ENCODE measurements at regions of chr5 and their contacts with region 1.

Region 1: GRCh38 chr5:166710288-166710687 is 1581.2 kb upstream of the WWC1 start:
- DNase-seq: peak in 1 of 2 experiments; percentile 7
- H3K4me3 ChIP-seq: no peak overlapping the region
- H3K4me3 Mint-ChIP-seq: no peak overlapping the region
- H3K27ac Mint-ChIP-seq: peak overlapping the region; percentile 43
- H3K4me1 ChIP-seq: peaks cover 37% of the 10 kb centered on the region
- H3K4me1 Mint-ChIP-seq: peaks cover 23% of the 10 kb centered on the region
- H3K27me3 ChIP-seq: no peaks in the 10 kb centered on the region
- H3K27me3 Mint-ChIP-seq: no peaks in the 10 kb centered on the region
- CTCF ChIP-seq: no peak

Region 2: GRCh38 chr5:166788050-166788650 is 77.9 kb after region 1 on chr5:
- CTCF ChIA-PET with region 1: no interaction called
- POLR2A ChIA-PET with region 1: no interaction called
- intact Hi-C with region 1: loop called (anchors 2 kb)
- DNase-seq: no peak
- H3K4me3 ChIP-seq: no peak overlapping the region
- H3K4me3 Mint-ChIP-seq: no peak overlapping the region
- H3K27ac Mint-ChIP-seq: no peak overlapping the region
- H3K4me1 ChIP-seq: peaks cover 13% of the 10 kb centered on the region; the same call in 1 of the 2 replicates
- H3K4me1 Mint-ChIP-seq: no peaks in the 10 kb centered on the region
- H3K27me3 ChIP-seq: no peaks in the 10 kb centered on the region
- H3K27me3 Mint-ChIP-seq: no peaks in the 10 kb centered on the region
- CTCF ChIP-seq: no peak